ENCODE measurements at regions of chr9 and their contacts with region 1.

Region 1: GRCh38 chr9:76704593-76705204 is 59.5 kb upstream of the PCA3 start:
- DNase-seq: no peak
- H3K4me3 Mint-ChIP-seq: no peak overlapping the region
- H3K27ac Mint-ChIP-seq: no peak overlapping the region
- H3K4me1 Mint-ChIP-seq: no peaks in the 10 kb centered on the region
- H3K27me3 Mint-ChIP-seq: peaks cover 46% of the 10 kb centered on the region

Region 2: GRCh38 chr9:76311586-76311985 is 393.1 kb before region 1 on chr9:
- CTCF ChIA-PET with region 1: no interaction called
- DNase-seq: no peak
- H3K4me3 Mint-ChIP-seq: no peak overlapping the region
- H3K27ac Mint-ChIP-seq: no peak overlapping the region
- H3K4me1 Mint-ChIP-seq: no peaks in the 10 kb centered on the region
- H3K27me3 Mint-ChIP-seq: peaks cover 12% of the 10 kb centered on the region

Region 3: DNA sequence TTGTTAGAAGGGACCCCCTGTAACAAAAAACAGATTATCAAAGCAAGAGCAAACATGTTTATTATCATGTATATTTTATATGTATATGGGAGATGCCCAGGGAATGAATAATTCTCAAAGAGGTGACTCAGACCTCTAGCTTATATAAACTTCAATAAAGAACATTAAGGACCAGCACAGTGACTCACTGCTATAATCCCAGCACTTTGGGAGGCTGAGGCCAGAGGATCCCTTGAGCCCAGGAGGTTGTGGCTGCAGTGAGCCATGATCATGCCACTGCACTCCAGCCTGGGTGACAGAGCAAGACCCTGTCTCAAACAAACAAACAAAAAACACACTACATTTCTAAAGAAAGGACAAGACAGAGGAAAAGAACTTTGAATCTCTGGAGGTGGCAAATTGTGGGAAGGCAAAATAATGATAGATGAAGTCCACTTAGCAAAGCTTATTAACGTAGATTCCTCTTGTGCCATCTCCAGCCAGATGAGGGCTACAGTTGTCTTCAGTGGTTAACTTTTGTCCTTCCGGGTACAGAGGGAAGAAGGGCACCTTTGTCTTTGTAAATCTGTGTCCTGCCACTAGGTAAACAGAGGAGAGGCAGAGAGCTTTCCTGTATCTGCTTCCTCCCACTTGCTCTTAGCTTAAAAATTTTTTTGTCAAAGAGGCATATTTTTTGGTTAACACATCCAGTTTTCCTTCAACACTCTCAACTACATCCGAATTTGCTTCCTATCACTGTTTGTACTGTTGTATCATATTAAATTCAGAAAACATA is 302.9 kb before region 1 on chr9:
- CTCF ChIA-PET with region 1: interaction called, 10 read pairs
- DNase-seq: no peak
- H3K4me3 Mint-ChIP-seq: no peak overlapping the region
- H3K27ac Mint-ChIP-seq: peak overlapping the region; percentile 49
- H3K4me1 Mint-ChIP-seq: peaks cover 40% of the 10 kb centered on the region
- H3K27me3 Mint-ChIP-seq: peaks cover 6% of the 10 kb centered on the region

Region 4: DNA sequence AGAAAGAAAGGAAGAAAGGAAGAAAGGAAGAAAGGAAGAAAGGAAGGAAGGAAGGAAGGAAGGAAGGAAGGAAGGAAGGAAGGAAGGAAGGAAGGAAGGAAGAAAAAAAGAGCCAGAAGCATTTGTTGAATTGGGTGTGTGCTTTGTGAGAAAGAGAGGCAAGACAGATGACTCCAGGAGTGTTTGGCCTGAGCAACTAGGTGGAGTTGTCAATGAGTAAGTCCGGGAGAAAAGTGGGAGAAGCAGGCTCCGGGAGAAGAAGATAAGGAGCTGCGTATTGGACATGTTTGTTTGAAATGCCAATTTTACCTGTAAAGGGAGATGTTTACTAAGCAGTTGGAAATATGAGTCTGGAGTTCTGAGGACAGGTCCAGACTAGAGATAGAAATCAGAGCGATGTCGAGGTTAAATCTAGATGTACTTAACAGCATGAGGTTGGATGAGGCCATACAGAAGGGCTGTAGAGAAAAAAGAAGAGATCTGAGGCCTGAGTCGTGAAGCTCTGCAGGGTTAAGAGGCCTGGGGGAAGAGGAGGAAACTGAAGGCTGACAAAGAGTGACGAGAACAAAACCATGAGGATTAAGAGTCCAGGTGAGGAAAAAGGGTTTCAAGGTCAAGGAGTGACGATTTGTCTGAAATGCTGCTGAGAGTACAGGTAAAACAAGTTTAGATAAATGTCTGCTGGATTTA is 260.7 kb before region 1 on chr9:
- CTCF ChIA-PET with region 1: interaction called, 22 read pairs
- DNase-seq: no peak
- H3K4me3 Mint-ChIP-seq: no peak overlapping the region
- H3K27ac Mint-ChIP-seq: no peak overlapping the region
- H3K4me1 Mint-ChIP-seq: peaks cover 10% of the 10 kb centered on the region
- H3K27me3 Mint-ChIP-seq: peaks cover 7% of the 10 kb centered on the region

Region 5: DNA sequence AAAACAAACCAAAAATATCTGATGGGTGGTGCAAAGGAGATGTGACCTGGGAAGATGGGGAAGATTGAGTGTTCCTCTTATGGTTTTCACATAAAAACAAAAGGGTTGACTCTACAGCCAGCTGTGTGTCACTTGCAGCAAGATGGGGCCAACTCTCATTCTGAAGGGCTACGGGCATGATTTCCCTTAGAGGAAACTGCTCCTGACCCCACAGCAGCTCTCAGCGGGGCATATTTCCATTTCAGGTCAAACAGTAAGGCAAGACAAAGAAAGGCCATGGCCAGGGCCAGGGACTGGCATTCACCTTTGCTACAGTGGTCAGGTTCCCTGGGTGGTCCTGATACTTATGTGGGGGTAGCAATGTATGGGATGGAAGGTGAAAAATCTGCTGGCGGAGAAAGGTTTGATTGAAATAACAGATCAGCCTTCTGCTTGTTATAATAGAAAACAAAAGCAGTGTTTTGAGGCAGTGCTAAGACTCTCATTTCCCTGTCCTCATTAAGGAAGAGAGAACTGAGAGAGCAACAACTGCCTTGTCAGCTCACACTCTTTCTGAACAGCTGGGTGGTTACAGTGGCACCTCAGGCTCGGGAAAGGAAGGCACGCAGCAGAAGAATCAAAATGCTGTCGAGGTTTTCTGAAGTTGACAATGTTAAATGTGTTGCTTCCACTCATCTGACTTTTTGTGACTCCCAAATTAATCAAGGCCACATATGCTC is 61.1 kb before region 1 on chr9:
- CTCF ChIA-PET with region 1: no interaction called
- DNase-seq: no peak
- H3K4me3 Mint-ChIP-seq: no peak overlapping the region
- H3K27ac Mint-ChIP-seq: no peak overlapping the region
- H3K4me1 Mint-ChIP-seq: no peaks in the 10 kb centered on the region
- H3K27me3 Mint-ChIP-seq: peaks cover 14% of the 10 kb centered on the region

Region 6: DNA sequence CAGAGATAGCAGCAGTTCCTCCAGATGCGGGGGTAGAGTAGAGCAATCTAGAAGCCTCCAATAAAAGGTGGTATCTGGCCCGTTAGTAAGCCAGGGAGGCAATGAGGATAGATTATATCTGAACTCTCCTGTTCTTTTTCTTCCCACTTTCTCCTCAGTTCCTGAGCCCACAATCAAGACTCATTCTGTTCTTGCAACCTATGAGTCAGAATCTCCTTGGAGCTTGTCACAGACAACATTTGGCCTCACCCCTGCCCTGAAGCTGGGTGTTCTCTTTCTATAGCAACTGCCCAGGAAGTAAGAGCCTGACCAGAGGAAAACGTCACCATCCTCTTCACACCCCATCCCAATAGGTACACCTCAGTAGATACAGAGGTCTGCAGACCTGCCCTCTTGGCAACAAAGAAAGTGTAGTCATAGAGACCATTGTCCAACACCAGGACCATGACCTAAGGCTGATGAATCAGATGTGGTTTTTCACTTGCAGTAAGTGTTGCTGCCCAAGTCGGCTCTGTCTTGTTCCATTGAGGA is 16.8 kb before region 1 on chr9:
- CTCF ChIA-PET with region 1: interaction called, 43 read pairs
- DNase-seq: no peak
- H3K4me3 Mint-ChIP-seq: no peak overlapping the region
- H3K27ac Mint-ChIP-seq: no peak overlapping the region
- H3K4me1 Mint-ChIP-seq: peaks cover 7% of the 10 kb centered on the region
- H3K27me3 Mint-ChIP-seq: peaks cover 34% of the 10 kb centered on the region

Region 7: DNA sequence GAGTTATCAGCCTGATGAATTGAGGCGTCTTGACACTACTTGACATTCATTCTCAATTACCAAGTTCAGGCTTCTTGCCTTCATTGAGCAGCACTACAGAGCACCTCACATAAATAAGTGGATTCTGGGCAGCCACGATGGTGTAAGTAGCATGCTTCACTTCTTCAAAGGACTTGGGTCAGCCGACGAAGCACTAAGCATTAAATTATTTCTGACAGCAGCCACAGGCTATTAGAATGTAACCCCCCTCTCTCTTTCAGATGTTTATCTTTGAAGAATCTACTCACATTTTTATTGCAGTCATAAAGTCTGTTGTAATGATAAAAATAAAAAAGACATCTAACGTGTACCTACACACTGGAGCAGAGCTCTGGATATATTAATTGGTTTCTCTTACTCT is 426.7 kb after region 1 on chr9:
- CTCF ChIA-PET with region 1: no interaction called
- DNase-seq: no peak
- H3K4me3 Mint-ChIP-seq: no peak overlapping the region
- H3K27ac Mint-ChIP-seq: no peak overlapping the region
- H3K4me1 Mint-ChIP-seq: no peaks in the 10 kb centered on the region
- H3K27me3 Mint-ChIP-seq: peaks cover 15% of the 10 kb centered on the region

Measured in activated naive CD4-positive, alpha-beta T cell treated with anti-CD3 and anti-CD28 coated beads, Interleukin-2, amount 10 ng/mL, durations not matched to agents 7 days and 5 days (primary cell).